AG04449 (cell line): ENCODE measurements at regions of chr16 and their contacts with region 1.

Region 1: GRCh38 chr16:85615852-85616606 is 2.9 kb downstream of the GSE1 start:
- DNase-seq: no peak
- H3K4me3 ChIP-seq: no peak overlapping the region; the same call in none of the 2 replicates
- CTCF ChIP-seq: peak; percentile 94

Region 2: GRCh38 chr16:85275533-85276249 is 340.3 kb before region 1 on chr16:
- CTCF ChIA-PET with region 1: interaction called, 50 read pairs
- POLR2A ChIA-PET with region 1: no interaction called
- DNase-seq: no peak
- H3K4me3 ChIP-seq: no peak overlapping the region
- CTCF ChIP-seq: peak; percentile 96

Region 3: DNA sequence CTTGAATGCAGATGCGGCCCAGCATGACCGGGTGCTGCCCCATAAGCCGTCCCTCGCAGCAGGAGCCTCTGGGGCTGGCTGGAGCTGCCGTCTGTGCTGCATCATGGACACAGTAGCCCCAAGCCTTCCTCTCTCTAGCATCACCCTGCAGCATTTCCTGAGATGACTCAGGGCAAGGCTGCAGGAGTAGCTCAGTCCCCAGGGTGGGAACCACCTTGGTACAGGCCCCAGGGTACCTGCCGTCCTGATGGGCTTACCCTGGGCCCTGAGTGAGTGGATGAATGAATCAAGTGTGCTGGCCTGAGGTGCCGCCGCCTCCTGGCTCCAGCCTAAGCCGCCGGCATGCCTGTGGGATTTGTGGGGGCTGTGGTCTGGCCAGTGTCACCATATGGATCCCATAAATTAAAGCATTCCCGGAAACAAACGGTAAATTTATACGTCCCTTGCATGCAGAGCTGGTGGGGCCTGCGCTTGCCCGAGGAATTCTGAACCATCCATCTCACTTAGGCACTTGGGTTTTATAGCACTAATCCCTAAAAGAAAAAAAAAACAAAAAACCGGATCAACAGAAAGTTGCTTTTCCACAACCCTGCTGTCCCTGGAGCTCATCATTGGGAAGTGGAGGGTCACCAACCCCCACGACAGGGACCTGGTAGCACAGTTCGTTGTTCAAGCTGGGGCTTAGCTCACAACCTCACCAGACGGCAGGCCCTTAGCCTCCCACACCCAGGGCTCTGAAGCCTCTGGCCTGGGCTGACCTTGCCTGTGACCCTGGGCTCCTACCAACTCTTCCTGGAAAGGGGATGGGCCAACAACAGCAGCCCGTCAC is 261.1 kb before region 1 on chr16:
- CTCF ChIA-PET with region 1: interaction called, 11 read pairs
- POLR2A ChIA-PET with region 1: interaction called, 3 read pairs
- DNase-seq: peak; percentile 88
- H3K4me3 ChIP-seq: 0 out of 2 replicates have a peak overlapping the region, but pooled peaks have one; percentile 4
- CTCF ChIP-seq: no peak

Region 4: GRCh38 chr16:85393674-85394483 is 222.2 kb before region 1 on chr16:
- CTCF ChIA-PET with region 1: interaction called, 86 read pairs
- POLR2A ChIA-PET with region 1: no interaction called
- DNase-seq: no peak
- H3K4me3 ChIP-seq: peak overlapping the region; percentile 15; the same call in 1 of the 2 replicates
- CTCF ChIP-seq: peak; percentile 95

Region 5: GRCh38 chr16:85586380-85587104 is 29.5 kb before region 1 on chr16:
- CTCF ChIA-PET with region 1: interaction called, 10 read pairs
- POLR2A ChIA-PET with region 1: no interaction called
- DNase-seq: no peak
- H3K4me3 ChIP-seq: no peak overlapping the region
- CTCF ChIP-seq: no peak

Region 6: DNA sequence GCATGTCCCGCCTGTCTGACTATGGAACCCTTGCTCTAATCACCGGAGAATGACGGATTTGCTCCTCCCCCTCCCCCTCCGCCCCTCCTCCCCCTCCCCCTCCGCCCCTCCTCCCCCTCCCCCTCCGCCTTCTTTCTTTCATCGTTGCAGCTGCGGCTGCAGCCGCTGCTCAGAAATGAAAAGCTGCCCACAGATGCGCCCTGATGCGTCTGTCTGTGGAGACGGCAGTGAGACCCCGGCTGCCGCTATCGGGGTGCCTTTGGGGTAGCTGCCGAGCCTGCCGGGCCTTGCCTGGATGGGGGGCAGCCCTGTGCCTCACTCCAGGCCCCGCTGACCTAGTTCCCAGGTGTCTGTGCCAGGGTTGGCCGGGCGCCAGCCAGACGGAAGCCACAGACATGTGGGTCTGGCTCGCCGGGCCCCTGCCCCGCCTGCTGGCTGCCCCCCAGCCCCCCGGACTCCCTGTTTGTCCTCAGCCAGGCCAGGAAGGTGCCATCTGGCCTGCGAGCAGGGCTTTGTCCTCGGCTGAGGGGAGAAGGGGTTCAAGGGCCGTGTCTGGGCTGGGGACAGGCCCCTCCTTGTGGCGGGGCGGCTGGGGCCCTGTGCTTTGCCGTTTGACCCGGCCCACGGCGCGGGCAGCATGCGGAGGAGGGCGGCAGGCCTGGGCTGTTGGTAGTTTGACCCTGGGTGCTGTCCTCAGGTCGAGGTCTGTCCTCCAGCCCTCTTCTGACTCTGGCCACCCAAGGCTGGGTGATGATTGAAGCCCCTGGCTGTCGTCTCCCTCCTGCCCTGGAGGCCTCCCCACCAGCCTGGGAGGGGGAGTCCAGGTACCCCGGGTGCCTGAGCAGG is 35.2 kb after region 1 on chr16:
- CTCF ChIA-PET with region 1: interaction called, 11 read pairs
- POLR2A ChIA-PET with region 1: no interaction called
- DNase-seq: no peak
- H3K4me3 ChIP-seq: no peak overlapping the region
- CTCF ChIP-seq: no peak